MCF 10A (cell line): ENCODE measurements at regions of chr10 and their contacts with region 1.

Region 1: GRCh38 chr10:107409522-107409921 is 245.0 kb upstream of the SORCS1 start:
- DNase-seq: peak; percentile 63
- H3K4me3 Mint-ChIP-seq: no peak overlapping the region
- H3K27ac Mint-ChIP-seq: no peak overlapping the region
- H3K4me1 Mint-ChIP-seq: peaks cover 7% of the 10 kb centered on the region
- H3K27me3 Mint-ChIP-seq: no peaks in the 10 kb centered on the region
- CTCF ChIP-seq: peak; percentile 55

Region 2: DNA sequence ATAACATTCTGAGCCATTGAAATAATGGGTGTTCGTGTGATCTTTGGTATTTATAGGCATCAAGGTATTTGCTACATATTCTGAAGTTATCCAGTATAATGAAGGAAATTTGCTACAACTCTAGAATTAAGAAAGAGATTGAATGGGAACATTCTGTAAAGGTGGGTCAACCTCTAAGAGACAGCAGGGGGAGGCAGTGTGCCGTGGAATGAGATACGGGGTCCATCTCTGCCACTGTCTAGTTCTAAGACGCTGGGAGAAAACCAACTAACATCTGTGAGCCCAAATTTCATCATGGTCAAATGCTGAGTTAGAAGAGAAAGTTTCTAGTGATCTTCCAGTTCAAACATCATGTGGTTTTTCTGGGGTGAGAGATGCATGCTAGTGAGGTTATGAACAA is 613.9 kb before region 1 on chr10:
- CTCF ChIA-PET with region 1: no interaction called
- POLR2A ChIA-PET with region 1: no interaction called
- intact Hi-C with region 1: loop called (anchors 2 kb)
- DNase-seq: peak; percentile 64
- H3K4me3 Mint-ChIP-seq: no peak overlapping the region
- H3K27ac Mint-ChIP-seq: no peak overlapping the region
- H3K4me1 Mint-ChIP-seq: peaks cover 6% of the 10 kb centered on the region
- H3K27me3 Mint-ChIP-seq: no peaks in the 10 kb centered on the region
- CTCF ChIP-seq: peak; percentile 52

Region 3: GRCh38 chr10:107790271-107790670 is 380.7 kb after region 1 on chr10:
- CTCF ChIA-PET with region 1: interaction called, 10 read pairs
- POLR2A ChIA-PET with region 1: no interaction called
- intact Hi-C with region 1: no loop called
- DNase-seq: no peak
- H3K4me3 Mint-ChIP-seq: no peak overlapping the region
- H3K27ac Mint-ChIP-seq: no peak overlapping the region
- H3K4me1 Mint-ChIP-seq: no peaks in the 10 kb centered on the region
- H3K27me3 Mint-ChIP-seq: no peaks in the 10 kb centered on the region
- CTCF ChIP-seq: no peak

Region 4: DNA sequence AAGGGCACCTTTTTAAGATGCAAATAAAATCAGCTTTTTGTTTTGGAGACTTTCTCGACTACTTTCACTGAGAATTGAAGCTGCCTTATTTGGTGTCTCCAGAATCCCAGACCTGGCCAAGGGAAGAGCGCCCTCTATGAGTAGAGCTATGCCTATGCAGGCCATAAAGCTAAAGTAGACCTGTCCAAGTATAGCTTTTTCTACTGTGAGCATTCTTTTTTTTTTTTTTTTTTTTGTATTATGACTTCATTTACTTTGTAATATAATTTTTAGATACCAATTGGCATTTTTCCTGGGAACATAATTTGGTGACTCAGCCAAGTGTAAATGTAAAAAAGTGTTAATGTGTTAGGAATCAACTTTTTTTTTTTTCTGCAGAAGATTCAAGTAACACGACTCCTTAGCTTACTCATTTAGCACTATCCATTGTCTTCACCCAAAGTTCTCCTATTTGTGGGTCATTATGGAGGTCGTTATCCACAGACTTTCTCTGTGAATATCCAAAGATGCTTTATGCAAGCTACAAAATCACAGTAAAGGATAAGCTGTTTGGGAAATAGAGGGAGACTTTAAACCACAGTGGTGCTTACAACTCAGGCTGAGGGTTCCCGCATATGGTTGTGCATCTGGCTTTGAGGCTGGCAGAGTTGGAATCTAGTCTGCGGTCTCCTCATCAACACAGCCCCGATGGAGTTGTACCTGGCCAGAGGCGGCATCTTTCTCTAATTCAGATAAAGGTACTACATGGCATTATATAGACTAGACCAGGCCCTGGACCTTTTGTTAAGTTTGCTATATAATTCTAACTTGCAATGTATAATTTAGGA is 795.2 kb after region 1 on chr10:
- CTCF ChIA-PET with region 1: interaction called, 44 read pairs
- POLR2A ChIA-PET with region 1: interaction called, 3 read pairs
- intact Hi-C with region 1: loop called (anchors 1 kb)
- DNase-seq: peak; percentile 59
- H3K4me3 Mint-ChIP-seq: no peak overlapping the region
- H3K27ac Mint-ChIP-seq: no peak overlapping the region
- H3K4me1 Mint-ChIP-seq: no peaks in the 10 kb centered on the region
- H3K27me3 Mint-ChIP-seq: no peaks in the 10 kb centered on the region
- CTCF ChIP-seq: peak; percentile 75